ENCODE measurements at regions of chr1 and their contacts with region 1.

Region 1: GRCh38 chr1:45303582-45304310 is 22.9 kb upstream of the HPDL start:
- DNase-seq: peak; percentile 93 to 97
- H3K4me3 ChIP-seq: peak overlapping the region; percentile 78
- H3K4me3 Mint-ChIP-seq: peak overlapping the region; percentile 77
- H3K27ac Mint-ChIP-seq: peak overlapping the region; percentile 87
- H3K4me1 ChIP-seq: peaks cover 7% of the 10 kb centered on the region; the same call in 1 of the 2 replicates
- H3K4me1 Mint-ChIP-seq: peaks cover 22% of the 10 kb centered on the region
- H3K27me3 ChIP-seq: no peaks in the 10 kb centered on the region
- H3K27me3 Mint-ChIP-seq: no peaks in the 10 kb centered on the region
- CTCF ChIP-seq: peak; percentile 47 to 68

Region 2: GRCh38 chr1:44819608-44820327 is 484.0 kb before region 1 on chr1:
- CTCF ChIA-PET with region 1: no interaction called
- POLR2A ChIA-PET with region 1: interaction called, 11 read pairs
- intact Hi-C with region 1: no loop called
- DNase-seq: peak; percentile 86 to 95
- H3K4me3 ChIP-seq: peak overlapping the region; percentile 49
- H3K4me3 Mint-ChIP-seq: peak overlapping the region; percentile 80
- H3K27ac Mint-ChIP-seq: peak overlapping the region; percentile 100
- H3K4me1 ChIP-seq: 0 out of 2 replicates have a peak, but pooled peaks cover 7% of the 10 kb centered on the region
- H3K4me1 Mint-ChIP-seq: peaks cover 8% of the 10 kb centered on the region
- H3K27me3 ChIP-seq: no peaks in the 10 kb centered on the region
- H3K27me3 Mint-ChIP-seq: no peaks in the 10 kb centered on the region
- CTCF ChIP-seq: no peak

Region 3: DNA sequence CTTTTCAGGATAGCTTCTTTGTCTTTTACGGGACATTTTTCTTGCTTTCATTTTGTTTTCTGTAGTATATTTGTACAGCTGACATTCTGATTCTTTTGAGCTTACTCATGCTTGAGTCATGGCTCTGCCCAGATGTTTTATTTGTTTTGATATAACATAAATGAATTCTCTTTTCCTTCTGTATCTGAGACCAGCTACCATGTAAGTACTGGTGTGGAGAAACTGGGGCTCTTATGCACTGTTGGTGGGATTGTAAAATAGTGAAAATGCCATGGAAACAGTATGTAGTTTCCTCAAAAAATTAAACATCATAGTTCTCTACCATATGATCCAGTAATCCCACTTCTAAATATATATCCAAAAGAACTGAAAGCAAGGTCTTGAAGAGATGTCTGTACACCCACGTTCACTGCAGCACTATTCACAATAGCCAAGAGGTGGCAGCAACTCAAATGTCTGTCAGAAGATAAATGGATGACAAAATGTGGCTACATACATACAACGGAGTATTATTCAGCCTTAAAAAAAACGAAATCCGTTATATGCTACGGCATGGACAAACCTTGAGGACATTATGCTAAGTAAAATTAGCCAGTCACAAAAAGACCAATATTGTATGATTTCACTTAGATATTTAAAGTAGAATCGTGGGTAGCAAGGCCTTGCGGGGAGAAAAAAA is 378.8 kb before region 1 on chr1:
- CTCF ChIA-PET with region 1: no interaction called
- POLR2A ChIA-PET with region 1: no interaction called
- intact Hi-C with region 1: no loop called
- DNase-seq: peak in 1 of 2 experiments; percentile 19
- H3K4me3 ChIP-seq: no peak overlapping the region
- H3K4me3 Mint-ChIP-seq: no peak overlapping the region
- H3K27ac Mint-ChIP-seq: no peak overlapping the region
- H3K4me1 ChIP-seq: no peaks in the 10 kb centered on the region
- H3K4me1 Mint-ChIP-seq: no peaks in the 10 kb centered on the region
- H3K27me3 ChIP-seq: no peaks in the 10 kb centered on the region
- H3K27me3 Mint-ChIP-seq: no peaks in the 10 kb centered on the region
- CTCF ChIP-seq: peak in 1 of 2 experiments; percentile 29

Region 4: GRCh38 chr1:45018599-45019230 is 285.0 kb before region 1 on chr1:
- CTCF ChIA-PET with region 1: interaction called, 19 read pairs
- POLR2A ChIA-PET with region 1: interaction called, 11 read pairs
- intact Hi-C with region 1: loop called (anchors 1 kb)
- DNase-seq: peak; percentile 56 to 63
- H3K4me3 ChIP-seq: no peak overlapping the region
- H3K4me3 Mint-ChIP-seq: no peak overlapping the region
- H3K27ac Mint-ChIP-seq: no peak overlapping the region
- H3K4me1 ChIP-seq: no peaks in the 10 kb centered on the region
- H3K4me1 Mint-ChIP-seq: no peaks in the 10 kb centered on the region
- H3K27me3 ChIP-seq: no peaks in the 10 kb centered on the region
- H3K27me3 Mint-ChIP-seq: no peaks in the 10 kb centered on the region
- CTCF ChIP-seq: peak; percentile 65 to 86

Region 5: DNA sequence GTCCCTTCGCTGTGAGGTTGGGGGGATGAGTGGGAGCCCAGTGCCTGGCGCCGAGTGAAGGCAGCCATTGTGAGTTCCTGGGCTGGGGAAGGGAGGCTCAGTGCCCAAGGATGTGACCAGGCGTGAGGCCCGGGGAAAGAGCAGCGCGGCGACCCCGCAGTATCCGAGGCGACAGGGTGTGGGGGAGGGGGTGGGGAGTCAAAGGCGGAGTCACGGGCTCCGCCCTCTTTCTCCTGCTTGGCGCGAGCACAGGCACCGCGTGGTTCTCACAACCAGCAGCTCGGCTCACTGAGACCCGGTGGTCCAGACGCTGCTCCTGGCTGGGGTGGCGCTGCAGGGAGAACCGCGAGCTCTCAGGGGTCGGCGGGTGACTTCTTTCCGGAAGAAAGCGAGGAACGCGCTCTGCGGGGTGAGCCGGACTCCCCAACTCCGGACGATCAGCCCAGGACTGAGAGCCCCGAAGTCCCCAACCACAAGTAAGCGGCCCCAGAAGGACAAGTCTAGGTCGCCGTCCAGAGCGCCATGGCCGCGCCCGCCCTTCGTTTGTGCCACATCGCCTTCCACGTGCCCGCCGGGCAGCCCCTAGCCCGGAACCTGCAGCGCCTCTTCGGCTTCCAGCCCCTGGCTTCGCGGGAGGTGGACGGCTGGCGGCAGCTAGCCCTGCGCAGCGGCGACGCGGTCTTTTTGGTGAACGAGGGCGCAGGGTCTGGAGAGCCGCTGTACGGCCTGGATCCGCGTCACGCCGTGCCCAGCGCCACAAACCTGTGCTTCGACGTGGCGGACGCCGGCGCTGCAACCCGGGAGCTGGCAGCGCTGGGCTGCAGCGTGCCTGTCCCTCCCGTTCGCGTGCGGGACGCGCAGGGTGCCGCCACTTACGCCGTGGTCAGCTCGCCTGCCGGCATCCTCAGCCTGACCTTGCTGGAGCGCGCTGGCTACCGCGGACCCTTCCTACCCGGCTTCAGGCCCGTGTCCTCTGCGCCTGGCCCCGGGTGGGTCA is 23.2 kb after region 1 on chr1 and contains the start of gene HPDL:
- CTCF ChIA-PET with region 1: interaction called, 26 read pairs
- POLR2A ChIA-PET with region 1: interaction called, 32 read pairs
- intact Hi-C with region 1: loop called (anchors 1 kb)
- DNase-seq: peak; percentile 88 to 91
- H3K4me3 ChIP-seq: peak within 1 kb of the TSS; percentile 98
- H3K4me3 Mint-ChIP-seq: peak within 1 kb of the TSS; percentile 89
- H3K27ac Mint-ChIP-seq: peak within 1 kb of the TSS; percentile 93
- H3K4me1 ChIP-seq: peaks cover 36% of the 10 kb centered on the region
- H3K4me1 Mint-ChIP-seq: peaks cover 16% of the 10 kb centered on the region
- H3K27me3 ChIP-seq: no peaks in the 10 kb centered on the region
- H3K27me3 Mint-ChIP-seq: no peaks in the 10 kb centered on the region
- CTCF ChIP-seq: peak in 1 of 2 experiments; percentile 6
- total RNA-seq, gene HPDL: 78.2 and 90.6 TPM in 2 replicates

Region 6: GRCh38 chr1:45490626-45491486 is 187.1 kb after region 1 on chr1 and contains the start of gene TESK2:
- CTCF ChIA-PET with region 1: interaction called, 6 read pairs
- POLR2A ChIA-PET with region 1: interaction called, 10 read pairs
- intact Hi-C with region 1: loop called (anchors 1 kb)
- DNase-seq: peak; percentile 97 to 99
- H3K4me3 ChIP-seq: peak within 1 kb of the TSS; percentile 92
- H3K4me3 Mint-ChIP-seq: no peak within 1 kb of the TSS
- H3K27ac Mint-ChIP-seq: no peak within 1 kb of the TSS
- H3K4me1 ChIP-seq: no peaks in the 10 kb centered on the region
- H3K4me1 Mint-ChIP-seq: peaks cover 15% of the 10 kb centered on the region
- H3K27me3 ChIP-seq: no peaks in the 10 kb centered on the region
- H3K27me3 Mint-ChIP-seq: no peaks in the 10 kb centered on the region
- CTCF ChIP-seq: peak in 1 of 2 experiments; percentile 1
- total RNA-seq, gene TESK2: 11.9 and 14.7 TPM in 2 replicates

Measured in Caco-2 (cell line).